B cell (primary cell): ENCODE measurements at regions of chr3 and their contacts with region 1.

Region 1: DNA sequence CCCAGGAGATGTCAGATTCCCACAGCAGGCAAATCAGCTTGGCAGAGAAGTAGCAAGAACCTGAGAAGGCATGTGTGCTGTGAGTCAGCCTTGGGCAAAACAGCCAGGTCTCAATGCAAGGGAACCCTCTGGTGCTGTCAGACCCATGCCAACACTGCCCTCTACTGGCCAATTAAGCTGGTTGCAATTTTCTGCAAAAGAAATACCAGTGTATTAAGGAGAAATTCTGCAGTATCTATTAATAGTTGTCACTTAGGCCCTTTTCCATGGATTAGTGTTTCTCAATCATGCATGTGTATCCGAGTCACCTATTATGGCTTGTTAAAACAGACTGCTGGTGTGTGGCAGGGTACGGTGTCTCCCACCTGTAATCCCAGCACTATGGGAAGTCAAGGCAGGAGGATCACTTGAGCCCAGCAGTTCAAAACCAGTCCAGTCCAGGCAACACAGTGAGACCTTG is 26.2 kb downstream of the MAP4 start:
- DNase-seq: peak; percentile 81
- ATAC-seq: peak; percentile 88
- H3K4me3 ChIP-seq: no peak overlapping the region
- H3K4me3 Mint-ChIP-seq: no peak overlapping the region
- H3K27ac ChIP-seq: no peak overlapping the region
- H3K27ac Mint-ChIP-seq: no peak overlapping the region
- H3K4me1 ChIP-seq: peaks cover 0 to 5% of the 10 kb centered on the region in 2 donors
- H3K4me1 Mint-ChIP-seq: peaks cover 7% of the 10 kb centered on the region
- H3K27me3 ChIP-seq: no peaks in the 10 kb centered on the region
- H3K27me3 Mint-ChIP-seq: no peaks in the 10 kb centered on the region
- CTCF ChIP-seq: peak; percentile 94

Region 2: GRCh38 chr3:47522082-47522987 is 467.7 kb before region 1 on chr3:
- CTCF ChIA-PET with region 1: interaction called, 18 read pairs
- POLR2A ChIA-PET with region 1: no interaction called
- intact Hi-C with region 1: loop called (anchors 1 kb)
- DNase-seq: peak; percentile 83
- ATAC-seq: peak; percentile 95
- H3K4me3 ChIP-seq: no peak overlapping the region
- H3K4me3 Mint-ChIP-seq: no peak overlapping the region
- H3K27ac ChIP-seq: no peak overlapping the region
- H3K27ac Mint-ChIP-seq: no peak overlapping the region
- H3K4me1 ChIP-seq: peaks cover 3 to 4% of the 10 kb centered on the region in 2 donors
- H3K4me1 Mint-ChIP-seq: peaks cover 9% of the 10 kb centered on the region
- H3K27me3 ChIP-seq: no peaks in the 10 kb centered on the region
- H3K27me3 Mint-ChIP-seq: no peaks in the 10 kb centered on the region
- CTCF ChIP-seq: peak; percentile 92

Region 3: GRCh38 chr3:47836986-47837385 is 153.0 kb before region 1 on chr3:
- CTCF ChIA-PET with region 1: interaction called, 83 read pairs
- POLR2A ChIA-PET with region 1: no interaction called
- intact Hi-C with region 1: loop called (anchors 1 kb)
- DNase-seq: no peak
- ATAC-seq: no peak
- H3K4me3 ChIP-seq: no peak overlapping the region
- H3K4me3 Mint-ChIP-seq: no peak overlapping the region
- H3K27ac ChIP-seq: no peak overlapping the region
- H3K27ac Mint-ChIP-seq: peak overlapping the region; percentile 50
- H3K4me1 ChIP-seq: no peaks in the 10 kb centered on the region
- H3K4me1 Mint-ChIP-seq: peaks cover 2% of the 10 kb centered on the region
- H3K27me3 ChIP-seq: no peaks in the 10 kb centered on the region
- H3K27me3 Mint-ChIP-seq: no peaks in the 10 kb centered on the region
- CTCF ChIP-seq: no peak

Region 4: GRCh38 chr3:47976135-47976732 is 13.8 kb before region 1 on chr3:
- CTCF ChIA-PET with region 1: interaction called, 19 read pairs
- POLR2A ChIA-PET with region 1: no interaction called
- intact Hi-C with region 1: no loop called
- DNase-seq: peak; percentile 56
- ATAC-seq: peak; percentile 76
- H3K4me3 ChIP-seq: peak overlapping the region in 3 of 5 experiments; percentile 5 to 35 (median 21)
- H3K4me3 Mint-ChIP-seq: peak overlapping the region; percentile 52
- H3K27ac ChIP-seq: peak overlapping the region; percentile 52 to 55
- H3K27ac Mint-ChIP-seq: peak overlapping the region; percentile 80
- H3K4me1 ChIP-seq: peaks cover 25 to 32% of the 10 kb centered on the region in 2 donors
- H3K4me1 Mint-ChIP-seq: peaks cover 31% of the 10 kb centered on the region
- H3K27me3 ChIP-seq: no peaks in the 10 kb centered on the region
- H3K27me3 Mint-ChIP-seq: no peaks in the 10 kb centered on the region
- CTCF ChIP-seq: no peak

Region 5: DNA sequence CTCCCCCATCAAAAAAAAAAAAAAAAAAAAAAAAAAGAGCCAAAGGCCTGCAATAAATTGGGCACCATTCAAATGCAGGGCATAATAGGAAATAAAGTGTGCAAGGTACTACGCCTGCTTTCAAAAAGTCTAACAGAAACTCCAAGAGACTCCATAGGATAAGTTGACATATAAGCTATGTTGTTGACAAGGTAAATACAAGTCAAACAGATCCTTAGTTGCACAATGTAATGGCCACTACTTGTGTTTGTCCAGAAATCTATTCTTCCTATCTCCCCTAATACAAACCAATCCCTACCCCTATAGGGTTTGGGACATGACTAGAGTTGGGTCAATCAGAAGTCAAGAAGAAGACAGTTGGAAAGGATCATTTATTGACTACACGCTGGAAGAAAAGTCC is 10.2 kb after region 1 on chr3:
- CTCF ChIA-PET with region 1: interaction called, 15 read pairs
- POLR2A ChIA-PET with region 1: no interaction called
- intact Hi-C with region 1: no loop called
- DNase-seq: no peak
- ATAC-seq: no peak
- H3K4me3 ChIP-seq: no peak overlapping the region
- H3K4me3 Mint-ChIP-seq: no peak overlapping the region
- H3K27ac ChIP-seq: no peak overlapping the region
- H3K27ac Mint-ChIP-seq: no peak overlapping the region
- H3K4me1 ChIP-seq: no peaks in the 10 kb centered on the region
- H3K4me1 Mint-ChIP-seq: no peaks in the 10 kb centered on the region
- H3K27me3 ChIP-seq: no peaks in the 10 kb centered on the region
- H3K27me3 Mint-ChIP-seq: no peaks in the 10 kb centered on the region
- CTCF ChIP-seq: no peak

Region 6: GRCh38 chr3:48151058-48151806 is 161.2 kb after region 1 on chr3:
- CTCF ChIA-PET with region 1: interaction called, 18 read pairs
- POLR2A ChIA-PET with region 1: no interaction called
- intact Hi-C with region 1: loop called (anchors 1 kb)
- DNase-seq: peak; percentile 67
- ATAC-seq: peak; percentile 81
- H3K4me3 ChIP-seq: no peak overlapping the region
- H3K4me3 Mint-ChIP-seq: no peak overlapping the region
- H3K27ac ChIP-seq: no peak overlapping the region
- H3K27ac Mint-ChIP-seq: no peak overlapping the region
- H3K4me1 ChIP-seq: no peaks in the 10 kb centered on the region
- H3K4me1 Mint-ChIP-seq: no peaks in the 10 kb centered on the region
- H3K27me3 ChIP-seq: no peaks in the 10 kb centered on the region
- H3K27me3 Mint-ChIP-seq: no peaks in the 10 kb centered on the region
- CTCF ChIP-seq: peak; percentile 70

Region 7: DNA sequence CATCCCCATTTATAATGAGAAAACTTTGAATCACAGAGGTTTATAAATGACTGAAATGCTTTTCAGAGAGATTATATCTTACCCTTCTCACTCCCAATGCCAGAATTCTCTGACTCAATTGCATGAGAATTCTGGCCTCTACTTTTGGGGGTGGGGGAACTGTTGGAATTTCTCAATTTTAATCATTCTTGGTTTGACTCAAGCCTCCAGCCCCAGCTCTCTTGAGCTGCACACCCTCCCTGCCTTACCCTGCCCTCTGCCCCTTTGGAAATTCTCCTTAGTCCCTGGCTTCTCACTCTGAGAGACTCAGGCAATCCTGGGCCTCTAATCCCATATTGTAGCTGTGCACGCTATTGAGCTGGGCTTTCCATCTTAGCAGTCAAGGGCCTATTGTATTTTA is 295.1 kb after region 1 on chr3:
- CTCF ChIA-PET with region 1: no interaction called
- POLR2A ChIA-PET with region 1: no interaction called
- intact Hi-C with region 1: no loop called
- DNase-seq: no peak
- ATAC-seq: no peak
- H3K4me3 ChIP-seq: no peak overlapping the region
- H3K4me3 Mint-ChIP-seq: no peak overlapping the region
- H3K27ac ChIP-seq: no peak overlapping the region
- H3K27ac Mint-ChIP-seq: no peak overlapping the region
- H3K4me1 ChIP-seq: no peaks in the 10 kb centered on the region
- H3K4me1 Mint-ChIP-seq: peaks cover 6% of the 10 kb centered on the region
- H3K27me3 ChIP-seq: no peaks in the 10 kb centered on the region
- H3K27me3 Mint-ChIP-seq: no peaks in the 10 kb centered on the region
- CTCF ChIP-seq: no peak